GM23248 (cell line): ENCODE measurements at regions of chr9 and their contacts with region 1.

Region 1: GRCh38 chr9:101527066-101527465 is 6.6 kb upstream of the RNF20 start:
- DNase-seq: peak; percentile 46
- H3K4me3 ChIP-seq: no peak overlapping the region
- H3K27ac ChIP-seq: no peak overlapping the region
- H3K4me1 ChIP-seq: no peaks in the 10 kb centered on the region
- H3K27me3 ChIP-seq: no peaks in the 10 kb centered on the region

Region 2: GRCh38 chr9:101458955-101459631 is 68.0 kb before region 1 on chr9:
- in situ Hi-C with region 1: loop called (anchors 5 kb)
- DNase-seq: peak; percentile 80
- H3K4me3 ChIP-seq: no peak overlapping the region
- H3K27ac ChIP-seq: no peak overlapping the region
- H3K4me1 ChIP-seq: peaks cover 19% of the 10 kb centered on the region
- H3K27me3 ChIP-seq: no peaks in the 10 kb centered on the region